PC-3 (cell line): ENCODE measurements at regions of chr18 and their contacts with region 1.

Region 1: DNA sequence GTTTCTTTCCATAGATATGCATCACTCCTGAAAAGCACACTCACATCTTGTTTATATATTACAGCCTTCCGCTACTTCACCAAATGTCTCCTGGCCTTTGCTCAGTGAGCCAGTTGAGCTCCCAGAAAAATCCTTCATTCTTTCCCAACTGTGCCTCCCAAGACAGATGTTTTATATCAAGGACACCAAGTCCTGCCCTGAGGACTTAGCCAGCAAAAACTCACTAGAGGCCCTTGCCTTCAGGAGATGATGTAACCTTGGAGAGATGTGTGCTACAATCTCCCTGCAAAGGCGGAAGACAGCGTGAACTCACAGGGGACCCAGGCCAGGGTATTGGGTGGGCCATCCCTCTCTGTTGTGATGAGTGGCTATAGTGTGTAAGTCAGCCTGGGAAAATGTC is 86.1 kb upstream of the CTAGE1 start:
- DNase-seq: no peak
- ATAC-seq: no peak
- H3K4me3 ChIP-seq: no peak overlapping the region
- H3K27ac ChIP-seq: peak overlapping the region; percentile 93
- H3K4me1 ChIP-seq: peaks cover 26% of the 10 kb centered on the region
- H3K27me3 ChIP-seq: no peaks in the 10 kb centered on the region
- CTCF ChIP-seq: no peak

Region 2: GRCh38 chr18:22432672-22433137 is 71.1 kb before region 1 on chr18:
- CTCF ChIA-PET with region 1: no interaction called
- POLR2A ChIA-PET with region 1: no interaction called
- intact Hi-C with region 1: loop called (anchors 10 kb)
- DNase-seq: peak; percentile 90
- ATAC-seq: peak; percentile 79
- H3K4me3 ChIP-seq: no peak overlapping the region
- H3K27ac ChIP-seq: peak overlapping the region; percentile 62
- H3K4me1 ChIP-seq: peaks cover 41% of the 10 kb centered on the region
- H3K27me3 ChIP-seq: no peaks in the 10 kb centered on the region
- CTCF ChIP-seq: no peak

Region 3: DNA sequence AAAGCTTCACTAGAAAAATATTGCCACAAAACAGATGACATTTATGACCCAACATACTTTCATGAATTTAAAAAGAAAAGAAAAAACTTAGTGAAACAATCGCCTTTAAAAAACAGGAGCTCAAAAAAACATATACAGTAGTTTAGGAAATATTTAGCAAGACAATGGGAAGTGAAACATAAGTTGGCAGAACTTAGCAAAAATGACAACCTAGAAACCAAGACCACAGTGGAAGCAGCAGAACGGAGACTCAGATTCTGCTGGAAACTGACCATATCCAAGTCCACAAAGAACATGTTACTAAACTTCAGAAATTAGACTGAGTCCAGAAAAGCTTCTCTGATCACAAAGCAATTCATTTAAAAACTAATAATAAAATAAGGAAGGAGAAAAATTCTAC is 44.3 kb before region 1 on chr18:
- CTCF ChIA-PET with region 1: no interaction called
- POLR2A ChIA-PET with region 1: no interaction called
- intact Hi-C with region 1: no loop called
- DNase-seq: no peak
- ATAC-seq: no peak
- H3K4me3 ChIP-seq: no peak overlapping the region
- H3K27ac ChIP-seq: no peak overlapping the region
- H3K4me1 ChIP-seq: no peaks in the 10 kb centered on the region
- H3K27me3 ChIP-seq: no peaks in the 10 kb centered on the region
- CTCF ChIP-seq: no peak